ENCODE measurements at regions of chr7 and their contacts with region 1.

Region 1: DNA sequence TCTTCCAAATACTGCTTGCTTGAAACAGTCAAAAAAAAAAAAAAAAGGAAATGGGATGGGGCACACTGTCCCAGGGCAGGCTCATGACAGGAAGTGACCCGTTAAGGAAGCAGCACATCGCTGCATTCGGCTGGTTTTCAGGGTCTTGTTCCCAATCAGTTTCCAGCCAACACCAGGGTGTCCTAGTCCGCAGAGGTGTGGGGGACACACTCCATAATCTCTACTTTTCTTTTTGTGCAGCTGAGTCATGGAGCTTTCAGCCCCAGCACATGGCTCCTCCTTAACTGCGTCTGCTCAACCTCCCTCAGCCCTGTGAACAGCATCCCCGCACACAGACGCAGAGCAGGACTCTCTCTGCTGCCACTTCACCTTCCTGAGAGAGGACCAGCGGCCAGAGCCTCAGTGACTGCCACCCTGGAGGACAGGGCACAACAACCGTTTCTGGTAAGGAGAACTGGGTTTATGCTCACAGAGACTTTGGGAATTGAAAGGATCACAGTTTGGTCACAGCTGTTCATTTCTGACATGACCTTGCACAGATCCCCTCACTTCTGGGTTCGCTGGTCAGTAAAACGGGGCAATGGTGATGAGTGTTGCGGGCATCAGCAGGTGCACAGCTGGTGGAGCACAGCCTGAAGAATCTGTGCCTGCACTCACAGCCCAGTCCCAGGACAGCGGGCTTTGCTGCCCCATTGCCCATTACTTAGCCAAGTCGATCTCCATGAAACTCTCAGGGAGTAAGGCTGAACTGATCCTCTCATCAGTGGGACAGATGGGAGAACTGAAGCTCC is at the start of gene GIMAP5:
- DNase-seq: peak; percentile 73
- H3K4me3 Mint-ChIP-seq: peak within 1 kb of the TSS; percentile 88
- H3K27ac Mint-ChIP-seq: peak within 1 kb of the TSS; percentile 91
- H3K4me1 Mint-ChIP-seq: peaks cover 72% of the 10 kb centered on the region
- H3K27me3 Mint-ChIP-seq: no peaks in the 10 kb centered on the region

Region 2: GRCh38 chr7:150716368-150716767 is 21.1 kb before region 1 on chr7 and contains the start of gene GIMAP1:
- CTCF ChIA-PET with region 1: interaction called, 16 read pairs
- DNase-seq: peak; percentile 79
- H3K4me3 Mint-ChIP-seq: peak within 1 kb of the TSS; percentile 88
- H3K27ac Mint-ChIP-seq: peak within 1 kb of the TSS; percentile 94
- H3K4me1 Mint-ChIP-seq: peaks cover 63% of the 10 kb centered on the region
- H3K27me3 Mint-ChIP-seq: no peaks in the 10 kb centered on the region